Panc1 (cell line): ENCODE measurements at regions of chr5 and their contacts with region 1.

Region 1: GRCh38 chr5:91318724-91319123 is 64.4 kb downstream of the ARRDC3 start:
- DNase-seq: no peak
- ATAC-seq: no peak
- H3K4me3 ChIP-seq: no peak overlapping the region
- H3K27ac ChIP-seq: no peak overlapping the region
- H3K4me1 ChIP-seq: peaks cover 13% of the 10 kb centered on the region
- H3K27me3 ChIP-seq: no peaks in the 10 kb centered on the region
- CTCF ChIP-seq: no peak

Region 2: GRCh38 chr5:90940227-90940995 is 378.3 kb before region 1 on chr5:
- CTCF ChIA-PET with region 1: no interaction called
- POLR2A ChIA-PET with region 1: no interaction called
- in situ Hi-C with region 1: no loop called
- intact Hi-C with region 1: no loop called
- DNase-seq: no peak
- ATAC-seq: no peak
- H3K4me3 ChIP-seq: no peak overlapping the region
- H3K27ac ChIP-seq: no peak overlapping the region
- H3K4me1 ChIP-seq: no peaks in the 10 kb centered on the region
- H3K27me3 ChIP-seq: no peaks in the 10 kb centered on the region
- CTCF ChIP-seq: no peak

Region 3: DNA sequence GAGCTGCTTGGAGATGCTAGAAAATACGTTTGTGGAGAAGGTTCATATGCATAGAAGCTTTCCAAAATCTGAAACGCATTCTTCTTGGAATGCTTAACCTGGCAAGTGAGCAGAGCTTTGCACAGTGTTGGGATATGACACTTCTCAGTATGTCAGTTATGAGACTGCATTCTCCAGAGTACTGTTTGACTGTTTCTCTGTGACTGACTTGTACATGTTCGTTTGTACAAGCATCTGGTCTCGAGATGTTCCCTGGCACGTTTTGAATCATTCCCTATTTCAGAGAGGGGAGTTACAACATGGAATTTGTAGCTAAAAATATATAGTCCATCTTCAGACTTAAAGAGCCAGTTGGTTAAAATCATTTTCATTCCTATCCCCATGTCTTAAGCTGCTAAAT is 208.0 kb before region 1 on chr5:
- CTCF ChIA-PET with region 1: no interaction called
- POLR2A ChIA-PET with region 1: interaction called, 12 read pairs
- in situ Hi-C with region 1: no loop called
- intact Hi-C with region 1: loop called (anchors 10 kb)
- DNase-seq: no peak
- ATAC-seq: no peak
- H3K4me3 ChIP-seq: no peak overlapping the region
- H3K27ac ChIP-seq: no peak overlapping the region
- H3K4me1 ChIP-seq: no peaks in the 10 kb centered on the region
- H3K27me3 ChIP-seq: no peaks in the 10 kb centered on the region
- CTCF ChIP-seq: no peak

Region 4: DNA sequence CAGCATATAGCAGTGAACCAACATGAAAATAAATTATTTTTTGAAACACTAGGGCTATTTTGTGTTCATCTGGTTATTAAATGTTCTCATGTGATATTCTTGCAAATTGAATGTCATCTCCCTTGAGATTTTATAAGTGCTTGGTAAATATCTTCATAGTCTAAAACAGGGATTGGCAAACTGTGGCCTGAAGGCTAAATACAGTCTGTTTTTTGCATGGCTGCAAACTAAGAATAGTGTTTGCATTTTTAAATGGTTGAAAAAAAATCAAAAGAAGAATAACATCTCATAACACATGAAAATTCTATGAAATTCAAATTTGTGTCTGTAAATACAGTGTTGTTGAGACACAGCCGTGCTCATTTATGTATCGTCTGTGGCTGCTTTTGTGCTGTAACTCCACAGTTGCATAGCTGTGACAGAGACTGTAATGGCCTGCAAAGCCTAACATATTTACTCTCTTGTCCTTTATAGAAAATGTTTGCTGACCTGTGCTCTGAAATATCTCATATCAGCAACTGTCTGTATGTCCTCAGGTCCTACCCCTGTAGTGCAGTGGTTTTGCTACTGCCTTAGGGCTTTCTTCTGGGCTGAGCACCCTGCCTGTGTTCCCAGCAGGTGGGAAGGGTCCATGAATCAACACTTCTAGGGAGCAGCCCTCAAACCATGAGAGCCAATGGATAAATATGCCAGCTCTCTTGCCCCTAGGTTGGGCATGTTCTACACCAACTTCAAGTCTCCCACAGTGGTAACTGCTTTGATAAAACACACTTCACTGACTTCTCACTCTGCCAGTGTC is 106.1 kb after region 1 on chr5:
- CTCF ChIA-PET with region 1: no interaction called
- POLR2A ChIA-PET with region 1: no interaction called
- in situ Hi-C with region 1: no loop called
- intact Hi-C with region 1: no loop called
- DNase-seq: no peak
- ATAC-seq: no peak
- H3K4me3 ChIP-seq: no peak overlapping the region
- H3K27ac ChIP-seq: no peak overlapping the region
- H3K4me1 ChIP-seq: no peaks in the 10 kb centered on the region
- H3K27me3 ChIP-seq: no peaks in the 10 kb centered on the region
- CTCF ChIP-seq: no peak